PC-9 (cell line): ENCODE measurements at regions of chr5 and their contacts with region 1.

Region 1: GRCh38 chr5:92729088-92729487 is 851.9 kb downstream of the NR2F1-AS1 start:
- DNase-seq: no peak
- H3K4me3 ChIP-seq: no peak overlapping the region
- H3K27ac ChIP-seq: no peak overlapping the region
- H3K4me1 ChIP-seq: no peaks in the 10 kb centered on the region
- H3K27me3 ChIP-seq: no peaks in the 10 kb centered on the region
- CTCF ChIP-seq: no peak

Region 2: DNA sequence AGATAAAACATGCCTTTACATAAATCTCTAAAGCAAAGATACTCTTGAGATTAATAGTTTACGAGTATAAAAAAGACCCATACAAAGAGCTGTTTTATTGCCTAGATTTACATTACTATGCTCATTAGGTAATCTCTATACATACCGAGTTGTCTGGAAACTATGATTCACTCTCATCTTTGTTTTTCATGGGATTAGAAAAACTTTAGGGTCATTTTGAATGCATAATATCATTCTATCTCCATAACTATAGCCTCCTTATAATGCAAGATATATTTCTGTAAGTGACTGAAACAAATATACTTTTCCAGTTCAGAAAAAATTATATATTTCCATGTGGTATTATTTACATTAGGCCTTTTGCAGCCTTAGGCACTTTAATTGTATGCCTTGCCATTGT is 257.2 kb before region 1 on chr5:
- CTCF ChIA-PET with region 1: interaction called, 11 read pairs
- POLR2A ChIA-PET with region 1: no interaction called
- intact Hi-C with region 1: no loop called
- DNase-seq: no peak
- H3K4me3 ChIP-seq: no peak overlapping the region
- H3K27ac ChIP-seq: no peak overlapping the region
- H3K4me1 ChIP-seq: no peaks in the 10 kb centered on the region
- H3K27me3 ChIP-seq: no peaks in the 10 kb centered on the region
- CTCF ChIP-seq: no peak